ENCODE measurements at regions of chr14 and their contacts with region 1.

Region 1: DNA sequence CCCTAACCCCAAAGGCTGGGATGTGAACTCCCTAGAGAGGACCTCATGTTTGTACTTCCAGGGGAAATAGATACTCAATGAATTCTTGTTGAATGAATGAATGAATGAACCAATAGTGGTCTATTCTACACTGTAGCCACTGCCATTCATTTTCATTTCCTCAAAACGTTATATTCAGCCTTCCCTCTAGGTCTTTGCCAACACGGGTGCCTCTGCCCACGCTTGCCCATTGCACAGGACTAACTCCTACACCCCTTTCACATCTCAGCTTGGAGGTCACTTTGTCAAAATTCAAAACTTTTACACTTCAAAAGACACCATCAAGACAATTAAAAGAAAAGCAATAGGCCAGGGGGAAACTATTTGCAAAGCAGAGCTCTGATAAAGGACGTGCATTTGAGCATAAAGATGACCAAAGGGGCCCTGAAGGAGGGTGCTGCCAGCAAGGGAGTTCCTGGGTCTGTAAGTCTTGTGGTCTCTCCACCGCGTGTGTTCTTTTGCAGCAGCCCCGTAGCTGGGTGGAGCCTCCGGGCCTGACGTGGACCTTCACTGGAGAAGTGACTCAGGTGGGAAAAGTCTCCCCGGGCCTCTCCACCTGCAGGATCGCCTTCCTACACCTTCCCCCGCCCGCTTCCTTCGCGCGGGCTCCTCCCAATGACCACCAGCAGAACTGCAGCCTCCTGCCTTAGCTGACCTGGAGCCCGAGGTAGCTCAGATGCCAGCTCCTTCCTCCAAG is 31.5 kb downstream of the TMEM63C start:
- DNase-seq: peak; percentile 38 to 90
- H3K4me3 ChIP-seq: no peak overlapping the region
- H3K27ac ChIP-seq: no peak overlapping the region
- H3K4me1 ChIP-seq: peaks cover 0 to 6% (median 3%) of the 10 kb centered on the region in 4 experiments; a peak in 5 of 7 replicates
- H3K27me3 ChIP-seq: no peaks in the 10 kb centered on the region
- CTCF ChIP-seq: peak; percentile 82 to 92 (median 90)
- EP300 ChIP-seq: no peak
- POLR2A ChIP-seq: no peak
- RAD21 ChIP-seq: peak; percentile 82 to 86

Region 2: DNA sequence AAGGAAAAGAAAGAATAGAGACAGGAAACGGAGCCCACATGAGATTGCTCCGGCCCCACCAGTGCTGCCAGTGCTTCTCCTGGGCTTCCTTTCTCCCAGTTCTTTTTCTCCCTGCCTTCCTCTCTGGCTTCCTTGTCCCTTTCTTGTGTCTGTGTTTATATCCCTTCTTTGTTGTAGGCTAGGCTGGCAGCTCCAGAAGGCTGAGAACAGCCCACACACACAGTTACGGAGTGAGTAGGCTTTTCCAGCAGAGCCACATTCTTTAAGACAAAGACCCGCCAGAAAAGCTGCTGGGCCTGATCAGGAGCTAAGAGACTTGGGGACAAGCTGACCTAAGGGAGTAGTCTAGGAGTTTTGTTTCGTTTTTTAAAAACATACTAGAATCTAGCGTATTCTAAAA is 102.1 kb before region 1 on chr14:
- CTCF ChIA-PET with region 1: interaction called, 10 read pairs
- POLR2A ChIA-PET with region 1: no interaction called
- DNase-seq: peak in 1 of 2 experiments; percentile 59
- H3K4me3 ChIP-seq: peak overlapping the region in 1 of 4 experiments; percentile 39; a peak in 1 of 8 replicates
- H3K27ac ChIP-seq: peak overlapping the region; percentile 76
- H3K4me1 ChIP-seq: peaks cover 0 to 21% (median 14%) of the 10 kb centered on the region in 4 experiments; a peak in 6 of 7 replicates
- H3K27me3 ChIP-seq: no peaks in the 10 kb centered on the region
- CTCF ChIP-seq: no peak
- EP300 ChIP-seq: peak in 1 of 2 experiments; percentile 33; a peak in 1 of 3 replicates
- POLR2A ChIP-seq: peak in 1 of 2 experiments; percentile 73; a peak in 2 of 3 replicates
- RAD21 ChIP-seq: no peak

Region 3: GRCh38 chr14:77133720-77134338 is 79.3 kb before region 1 on chr14:
- CTCF ChIA-PET with region 1: interaction called, 41 read pairs
- POLR2A ChIA-PET with region 1: no interaction called
- DNase-seq: peak; percentile 80 to 84
- H3K4me3 ChIP-seq: no peak overlapping the region
- H3K27ac ChIP-seq: no peak overlapping the region
- H3K4me1 ChIP-seq: no peaks in the 10 kb centered on the region
- H3K27me3 ChIP-seq: no peaks in the 10 kb centered on the region
- CTCF ChIP-seq: no peak
- EP300 ChIP-seq: no peak
- POLR2A ChIP-seq: no peak
- RAD21 ChIP-seq: 0 out of 4 replicates have a peak, but pooled peaks of 1 of the 2 experiments have one; percentile 8

Region 4: GRCh38 chr14:77145975-77146740 is 67.0 kb before region 1 on chr14:
- CTCF ChIA-PET with region 1: interaction called, 233 read pairs
- POLR2A ChIA-PET with region 1: interaction called, 8 read pairs
- DNase-seq: no peak
- H3K4me3 ChIP-seq: peak overlapping the region in 1 of 4 experiments; percentile 14; a peak in 2 of 8 replicates
- H3K27ac ChIP-seq: no peak overlapping the region
- H3K4me1 ChIP-seq: peaks cover 8 to 42% (median 25%) of the 10 kb centered on the region in 4 experiments
- H3K27me3 ChIP-seq: no peaks in the 10 kb centered on the region
- CTCF ChIP-seq: no peak
- EP300 ChIP-seq: no peak
- POLR2A ChIP-seq: no peak
- RAD21 ChIP-seq: no peak

Region 5: DNA sequence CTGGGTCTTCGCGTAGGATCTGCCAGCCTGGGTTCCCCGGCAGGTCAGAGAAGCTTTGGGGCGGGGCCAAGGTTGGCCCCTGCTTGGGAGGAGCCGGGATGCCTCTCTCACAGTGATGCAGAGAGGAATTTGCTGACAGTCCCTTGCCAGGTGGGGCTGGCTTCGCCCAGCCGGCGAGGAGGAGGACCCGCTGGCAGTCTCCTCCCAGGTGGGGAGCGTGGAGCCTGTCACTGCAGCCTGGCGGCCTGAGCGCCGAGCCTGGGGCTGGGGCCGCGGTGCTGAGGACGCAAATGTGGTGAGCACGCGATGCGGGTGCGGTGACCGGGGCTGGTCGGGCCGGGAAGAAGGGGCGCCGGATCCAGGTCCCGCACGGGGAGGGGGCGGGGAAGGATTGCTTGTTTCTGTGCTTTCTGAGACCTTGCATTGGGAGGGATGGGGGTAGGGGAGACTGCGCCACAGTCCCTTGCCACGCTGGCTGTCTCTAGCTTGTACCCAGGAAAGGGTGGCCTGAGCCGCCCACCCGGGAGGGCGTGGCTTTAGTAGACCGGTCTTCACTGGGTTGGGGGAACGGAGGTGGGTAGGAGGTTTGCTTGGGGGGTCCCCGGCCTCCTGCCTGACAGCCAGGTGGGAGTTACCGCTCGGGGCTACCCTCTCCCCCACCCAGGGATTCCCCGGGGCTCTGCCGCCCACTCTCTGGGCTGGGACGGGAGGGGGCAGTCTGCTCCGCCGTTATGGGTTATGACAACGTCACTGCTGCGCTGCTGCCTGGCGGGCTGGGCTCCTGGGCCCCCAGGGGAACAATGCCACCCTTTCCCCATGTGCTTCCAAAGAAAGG is 31.3 kb before region 1 on chr14 and contains the start of gene TMEM63C:
- CTCF ChIA-PET with region 1: interaction called, 178 read pairs
- POLR2A ChIA-PET with region 1: interaction called, 3 read pairs
- DNase-seq: peak; percentile 92 to 95
- H3K4me3 ChIP-seq: peak within 1 kb of the TSS; percentile 59 to 83 (median 72)
- H3K27ac ChIP-seq: no peak within 1 kb of the TSS
- H3K4me1 ChIP-seq: peaks cover 3 to 11% (median 7%) of the 10 kb centered on the region in 4 experiments; a peak in 6 of 7 replicates
- H3K27me3 ChIP-seq: peaks cover 0 to 3% (median 1%) of the 10 kb centered on the region in 4 experiments; a peak in 3 of 7 replicates
- CTCF ChIP-seq: no peak
- EP300 ChIP-seq: peak; percentile 3 to 44; a peak in 2 of 3 replicates
- POLR2A ChIP-seq: no peak
- RAD21 ChIP-seq: 0 out of 4 replicates have a peak, but pooled peaks of 1 of the 2 experiments have one; percentile 7
- total RNA-seq, gene TMEM63C: 7.0 and 7.6 TPM in 2 replicates

Region 6: GRCh38 chr14:77245820-77246219 is 32.7 kb after region 1 on chr14:
- CTCF ChIA-PET with region 1: interaction called, 52 read pairs
- POLR2A ChIA-PET with region 1: no interaction called
- DNase-seq: no peak
- H3K4me3 ChIP-seq: no peak overlapping the region
- H3K27ac ChIP-seq: no peak overlapping the region
- H3K4me1 ChIP-seq: no peaks in the 10 kb centered on the region; a peak in 1 of 7 replicates
- H3K27me3 ChIP-seq: no peaks in the 10 kb centered on the region
- CTCF ChIP-seq: peak in 2 of 3 experiments; percentile 50 to 64; a peak in 3 of 4 replicates
- EP300 ChIP-seq: no peak
- POLR2A ChIP-seq: no peak
- RAD21 ChIP-seq: peak; percentile 48 to 62; a peak in 3 of 4 replicates

Region 7: DNA sequence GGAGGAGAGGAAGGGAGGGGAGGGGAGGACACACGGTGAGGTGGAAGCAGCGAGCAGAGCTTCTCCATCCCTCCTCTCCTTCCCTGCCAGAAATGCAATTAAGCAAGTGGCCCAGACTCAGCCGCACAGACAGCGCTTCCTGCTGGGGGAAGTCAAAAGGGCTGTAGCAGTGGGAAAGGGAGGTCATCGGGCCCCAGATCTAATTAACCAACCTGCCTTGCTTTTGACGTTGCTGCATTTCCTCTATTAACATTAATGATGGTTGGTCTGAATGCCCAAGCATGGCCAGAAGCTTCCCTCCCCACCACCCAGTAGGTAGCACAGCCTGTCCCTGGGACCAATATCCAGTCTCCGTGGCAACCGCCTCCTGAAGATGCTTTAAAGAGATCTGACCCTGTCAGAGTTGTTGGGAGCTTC is 62.5 kb after region 1 on chr14:
- CTCF ChIA-PET with region 1: interaction called, 25 read pairs
- POLR2A ChIA-PET with region 1: no interaction called
- DNase-seq: no peak
- H3K4me3 ChIP-seq: no peak overlapping the region
- H3K27ac ChIP-seq: no peak overlapping the region
- H3K4me1 ChIP-seq: peaks cover 0 to 4% (median 3%) of the 10 kb centered on the region in 4 experiments; a peak in 2 of 7 replicates
- H3K27me3 ChIP-seq: peaks cover 8 to 24% (median 23%) of the 10 kb centered on the region in 4 experiments
- CTCF ChIP-seq: peak; percentile 36 to 44 (median 38); a peak in 3 of 4 replicates
- EP300 ChIP-seq: no peak
- POLR2A ChIP-seq: no peak
- RAD21 ChIP-seq: peak; percentile 48 to 57

Measured in H1 (cell line).